ENCODE measurements at regions of chr1 and their contacts with region 1.

Region 1: DNA sequence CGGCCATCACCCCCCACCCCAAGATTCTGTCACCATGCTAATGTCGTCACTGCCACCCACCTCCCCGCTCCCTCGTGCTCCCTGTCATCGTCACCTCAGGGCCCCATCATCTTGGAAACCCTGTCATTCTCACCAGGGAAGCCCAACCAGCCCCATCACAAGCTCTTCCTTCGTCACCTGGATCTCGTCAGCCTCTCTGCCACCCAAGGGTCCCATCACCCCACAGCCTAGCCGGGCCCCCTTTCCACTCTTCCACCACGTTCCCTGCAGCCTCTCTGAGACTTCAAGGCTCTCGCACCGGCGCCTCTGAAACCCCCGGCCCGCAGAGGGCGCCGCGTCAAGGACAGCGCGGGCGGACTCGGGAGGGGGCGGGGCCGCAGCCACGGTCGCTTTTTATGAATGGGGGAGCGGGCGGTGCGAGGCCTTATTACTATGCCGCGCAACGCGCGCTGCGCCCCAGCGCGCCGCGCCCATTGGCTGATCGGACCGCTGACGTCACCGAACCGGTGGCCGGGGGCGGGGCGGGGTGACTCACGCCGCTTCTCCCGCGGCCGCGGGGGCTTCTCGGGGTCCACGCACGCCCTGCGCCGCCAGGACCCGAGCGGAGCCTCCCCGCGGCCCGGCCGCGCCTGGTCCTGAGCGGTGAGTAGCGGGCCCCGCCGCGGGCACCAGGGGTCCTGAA is at the start of gene GPR3:
- DNase-seq: peak; percentile 79 to 96 (median 92)
- ATAC-seq: peak; percentile 89
- H3K4me3 ChIP-seq: peak within 1 kb of the TSS; percentile 31 to 65
- H3K4me3 Mint-ChIP-seq: peak within 1 kb of the TSS; percentile 83
- H3K27ac ChIP-seq: peak within 1 kb of the TSS in 1 of 2 experiments; percentile 32
- H3K27ac Mint-ChIP-seq: peak within 1 kb of the TSS; percentile 64
- H3K4me1 ChIP-seq: peaks cover 27% of the 10 kb centered on the region
- H3K4me1 Mint-ChIP-seq: peaks cover 12% of the 10 kb centered on the region
- H3K27me3 ChIP-seq: no peaks in the 10 kb centered on the region
- H3K27me3 Mint-ChIP-seq: no peaks in the 10 kb centered on the region
- CTCF ChIP-seq: peak; percentile 35
- total RNA-seq, gene GPR3: 1.1 TPM in 1 of 2 experiments, not detected in the other

Region 2: GRCh38 chr1:27102707-27103491 is 289.3 kb before region 1 on chr1:
- CTCF ChIA-PET with region 1: interaction called, 9 read pairs
- POLR2A ChIA-PET with region 1: no interaction called
- intact Hi-C with region 1: loop called (anchors 2 to 5 kb)
- DNase-seq: peak; percentile 71 to 90 (median 79)
- ATAC-seq: peak; percentile 97
- H3K4me3 ChIP-seq: no peak overlapping the region
- H3K4me3 Mint-ChIP-seq: no peak overlapping the region
- H3K27ac ChIP-seq: no peak overlapping the region
- H3K27ac Mint-ChIP-seq: no peak overlapping the region
- H3K4me1 ChIP-seq: no peaks in the 10 kb centered on the region
- H3K4me1 Mint-ChIP-seq: peaks cover 8% of the 10 kb centered on the region
- H3K27me3 ChIP-seq: no peaks in the 10 kb centered on the region
- H3K27me3 Mint-ChIP-seq: no peaks in the 10 kb centered on the region
- CTCF ChIP-seq: peak; percentile 89

Region 3: DNA sequence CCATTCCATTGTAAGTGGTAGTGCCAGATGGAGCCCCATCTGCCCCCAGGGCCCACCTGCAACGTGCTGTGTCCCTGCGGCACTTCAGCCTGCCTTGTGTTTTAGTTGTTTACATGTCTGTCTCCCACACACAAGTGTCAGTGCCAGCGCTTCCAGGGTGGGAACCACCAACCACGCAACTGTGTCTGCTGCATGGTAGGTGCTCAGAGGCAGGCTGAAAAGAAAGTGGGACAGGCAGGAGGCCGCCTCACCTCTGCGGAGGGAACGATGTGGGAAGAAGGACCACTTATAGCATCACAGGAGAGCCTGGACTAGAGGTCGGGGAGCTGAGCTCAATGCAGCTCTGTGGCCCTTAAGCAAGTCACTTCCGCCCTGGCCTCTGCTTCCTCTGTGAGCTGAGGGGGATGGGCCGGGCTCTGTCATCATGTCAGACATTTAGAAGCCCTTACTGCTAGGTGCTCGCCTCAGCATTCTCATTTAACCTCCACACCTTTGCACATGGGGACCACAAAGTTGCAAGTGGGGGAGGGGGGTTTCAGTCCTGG is 255.2 kb before region 1 on chr1:
- CTCF ChIA-PET with region 1: no interaction called
- POLR2A ChIA-PET with region 1: no interaction called
- intact Hi-C with region 1: no loop called
- DNase-seq: peak; percentile 58 to 91 (median 81)
- ATAC-seq: peak; percentile 95
- H3K4me3 ChIP-seq: peak overlapping the region; percentile 41 to 45
- H3K4me3 Mint-ChIP-seq: peak overlapping the region; percentile 87
- H3K27ac ChIP-seq: peak overlapping the region; percentile 72 to 97
- H3K27ac Mint-ChIP-seq: peak overlapping the region; percentile 100
- H3K4me1 ChIP-seq: peaks cover 42% of the 10 kb centered on the region
- H3K4me1 Mint-ChIP-seq: peaks cover 61% of the 10 kb centered on the region
- H3K27me3 ChIP-seq: no peaks in the 10 kb centered on the region
- H3K27me3 Mint-ChIP-seq: no peaks in the 10 kb centered on the region
- CTCF ChIP-seq: no peak

Region 4: GRCh38 chr1:27306892-27307761 is 85.1 kb before region 1 on chr1:
- CTCF ChIA-PET with region 1: interaction called, 406 read pairs
- POLR2A ChIA-PET with region 1: interaction called, 3 read pairs
- intact Hi-C with region 1: no loop called
- DNase-seq: no peak
- ATAC-seq: no peak
- H3K4me3 ChIP-seq: no peak overlapping the region
- H3K4me3 Mint-ChIP-seq: no peak overlapping the region
- H3K27ac ChIP-seq: no peak overlapping the region
- H3K27ac Mint-ChIP-seq: no peak overlapping the region
- H3K4me1 ChIP-seq: no peaks in the 10 kb centered on the region
- H3K4me1 Mint-ChIP-seq: no peaks in the 10 kb centered on the region
- H3K27me3 ChIP-seq: no peaks in the 10 kb centered on the region
- H3K27me3 Mint-ChIP-seq: no peaks in the 10 kb centered on the region
- CTCF ChIP-seq: no peak

Region 5: DNA sequence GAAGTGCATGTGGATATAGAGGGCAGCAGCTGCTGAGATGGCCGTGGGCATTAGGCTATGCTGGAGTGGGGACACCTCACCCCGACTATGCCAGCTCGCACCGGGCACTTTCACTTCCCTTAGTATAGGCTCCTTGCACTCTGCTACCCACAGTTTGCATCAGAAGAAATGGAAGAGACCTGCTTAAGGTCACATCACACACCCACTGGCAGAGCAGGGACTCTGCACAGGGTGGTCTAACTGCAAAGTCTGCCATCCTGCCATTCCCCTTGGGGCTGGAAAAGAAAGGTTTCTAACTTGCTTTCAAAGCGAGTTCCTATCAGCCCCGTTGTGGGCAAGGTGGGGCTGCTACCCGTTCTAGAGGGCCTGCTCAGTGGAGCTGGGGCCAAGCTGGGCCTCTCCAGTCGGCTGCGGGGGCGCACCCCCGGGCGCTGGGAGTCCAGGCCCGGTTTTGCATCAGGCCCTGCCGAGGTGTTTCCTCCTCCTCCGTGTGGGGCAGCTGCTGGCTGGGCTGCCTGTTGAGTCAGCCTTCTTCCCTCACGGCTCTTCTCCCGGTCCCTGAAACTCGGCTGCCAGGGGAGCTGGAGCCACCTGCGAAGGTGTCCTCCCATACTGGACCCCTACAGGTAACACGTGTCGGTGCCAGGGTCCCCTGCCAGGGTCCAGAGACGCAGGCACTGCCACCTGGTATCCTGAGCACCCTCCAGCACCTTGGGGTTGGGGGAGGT is 50.5 kb before region 1 on chr1 and contains the start of gene SYTL1:
- CTCF ChIA-PET with region 1: interaction called, 120 read pairs
- POLR2A ChIA-PET with region 1: interaction called, 3 read pairs
- intact Hi-C with region 1: no loop called
- DNase-seq: peak; percentile 38 to 84 (median 72)
- ATAC-seq: peak; percentile 64
- H3K4me3 ChIP-seq: peak within 1 kb of the TSS; percentile 85 to 91
- H3K4me3 Mint-ChIP-seq: peak within 1 kb of the TSS; percentile 97
- H3K27ac ChIP-seq: peak within 1 kb of the TSS; percentile 69 to 86
- H3K27ac Mint-ChIP-seq: peak within 1 kb of the TSS; percentile 93
- H3K4me1 ChIP-seq: peaks cover 38% of the 10 kb centered on the region
- H3K4me1 Mint-ChIP-seq: peaks cover 55% of the 10 kb centered on the region
- H3K27me3 ChIP-seq: no peaks in the 10 kb centered on the region
- H3K27me3 Mint-ChIP-seq: no peaks in the 10 kb centered on the region
- CTCF ChIP-seq: no peak
- total RNA-seq, gene SYTL1: 103 to 113 TPM

Region 6: DNA sequence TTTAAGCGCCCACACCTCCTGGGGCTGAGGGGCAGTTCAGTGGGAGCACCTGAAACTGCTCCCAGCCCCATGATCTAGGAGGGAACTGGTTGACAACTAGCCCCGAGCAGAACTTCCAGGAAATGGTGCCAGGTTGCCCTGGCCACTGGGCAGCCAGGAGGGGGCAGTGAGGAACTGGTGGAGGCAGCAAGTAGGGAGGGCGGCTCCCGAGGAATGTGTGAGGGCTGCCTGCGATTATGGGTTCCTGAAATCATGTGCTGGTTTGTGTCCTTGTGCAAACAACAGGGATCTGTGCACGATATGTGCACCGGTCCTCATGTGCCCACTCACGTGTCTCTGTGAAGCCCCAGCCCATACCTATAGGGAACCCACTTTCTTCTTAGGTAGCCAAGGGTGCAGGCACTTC is 10.1 kb after region 1 on chr1:
- CTCF ChIA-PET with region 1: interaction called, 16 read pairs
- POLR2A ChIA-PET with region 1: no interaction called
- intact Hi-C with region 1: no loop called
- DNase-seq: peak in 3 of 9 experiments; percentile 23 to 50 (median 27)
- ATAC-seq: no peak
- H3K4me3 ChIP-seq: no peak overlapping the region
- H3K4me3 Mint-ChIP-seq: no peak overlapping the region
- H3K27ac ChIP-seq: peak overlapping the region in 1 of 2 experiments; percentile 31
- H3K27ac Mint-ChIP-seq: peak overlapping the region; percentile 91
- H3K4me1 ChIP-seq: peaks cover 19% of the 10 kb centered on the region
- H3K4me1 Mint-ChIP-seq: peaks cover 32% of the 10 kb centered on the region
- H3K27me3 ChIP-seq: no peaks in the 10 kb centered on the region
- H3K27me3 Mint-ChIP-seq: no peaks in the 10 kb centered on the region
- CTCF ChIP-seq: no peak

Region 7: GRCh38 chr1:27671964-27672749 is 279.9 kb after region 1 on chr1 and contains the start of gene IFI6:
- CTCF ChIA-PET with region 1: no interaction called
- POLR2A ChIA-PET with region 1: no interaction called
- intact Hi-C with region 1: loop called in 1 of 2 experiments (anchors 2 kb)
- DNase-seq: peak; percentile 47 to 94 (median 80)
- ATAC-seq: peak; percentile 92
- H3K4me3 ChIP-seq: peak within 1 kb of the TSS; percentile 48 to 71
- H3K4me3 Mint-ChIP-seq: peak within 1 kb of the TSS; percentile 92
- H3K27ac ChIP-seq: peak within 1 kb of the TSS; percentile 62 to 87
- H3K27ac Mint-ChIP-seq: peak within 1 kb of the TSS; percentile 98
- H3K4me1 ChIP-seq: peaks cover 35% of the 10 kb centered on the region
- H3K4me1 Mint-ChIP-seq: peaks cover 42% of the 10 kb centered on the region
- H3K27me3 ChIP-seq: no peaks in the 10 kb centered on the region
- H3K27me3 Mint-ChIP-seq: no peaks in the 10 kb centered on the region
- CTCF ChIP-seq: peak; percentile 28
- total RNA-seq, gene IFI6: 24.8 to 25.1 TPM